Activated CD4-positive, alpha-beta T cell treated with anti-CD3 and anti-CD28 coated beads, Interleukin-2, amount 10 ng/mL, durations not matched to agents 7 days and 5 days (primary cell): ENCODE measurements at regions of chr2 and their contacts with region 1.

Region 1: GRCh38 chr2:38602732-38603401 is at the start of gene HNRNPLL:
- DNase-seq: peak; percentile 95
- H3K4me3 Mint-ChIP-seq: peak within 1 kb of the TSS; percentile 85
- H3K27ac Mint-ChIP-seq: peak within 1 kb of the TSS; percentile 95
- H3K4me1 Mint-ChIP-seq: peaks cover 49% of the 10 kb centered on the region
- H3K27me3 Mint-ChIP-seq: no peaks in the 10 kb centered on the region
- total RNA-seq, gene HNRNPLL: 54.2 to 55.8 TPM

Region 2: GRCh38 chr2:38308821-38309220 is 294.0 kb before region 1 on chr2:
- CTCF ChIA-PET with region 1: no interaction called
- POLR2A ChIA-PET with region 1: no interaction called
- DNase-seq: no peak
- H3K4me3 Mint-ChIP-seq: no peak overlapping the region
- H3K27ac Mint-ChIP-seq: no peak overlapping the region
- H3K4me1 Mint-ChIP-seq: peaks cover 18% of the 10 kb centered on the region
- H3K27me3 Mint-ChIP-seq: no peaks in the 10 kb centered on the region

Region 3: DNA sequence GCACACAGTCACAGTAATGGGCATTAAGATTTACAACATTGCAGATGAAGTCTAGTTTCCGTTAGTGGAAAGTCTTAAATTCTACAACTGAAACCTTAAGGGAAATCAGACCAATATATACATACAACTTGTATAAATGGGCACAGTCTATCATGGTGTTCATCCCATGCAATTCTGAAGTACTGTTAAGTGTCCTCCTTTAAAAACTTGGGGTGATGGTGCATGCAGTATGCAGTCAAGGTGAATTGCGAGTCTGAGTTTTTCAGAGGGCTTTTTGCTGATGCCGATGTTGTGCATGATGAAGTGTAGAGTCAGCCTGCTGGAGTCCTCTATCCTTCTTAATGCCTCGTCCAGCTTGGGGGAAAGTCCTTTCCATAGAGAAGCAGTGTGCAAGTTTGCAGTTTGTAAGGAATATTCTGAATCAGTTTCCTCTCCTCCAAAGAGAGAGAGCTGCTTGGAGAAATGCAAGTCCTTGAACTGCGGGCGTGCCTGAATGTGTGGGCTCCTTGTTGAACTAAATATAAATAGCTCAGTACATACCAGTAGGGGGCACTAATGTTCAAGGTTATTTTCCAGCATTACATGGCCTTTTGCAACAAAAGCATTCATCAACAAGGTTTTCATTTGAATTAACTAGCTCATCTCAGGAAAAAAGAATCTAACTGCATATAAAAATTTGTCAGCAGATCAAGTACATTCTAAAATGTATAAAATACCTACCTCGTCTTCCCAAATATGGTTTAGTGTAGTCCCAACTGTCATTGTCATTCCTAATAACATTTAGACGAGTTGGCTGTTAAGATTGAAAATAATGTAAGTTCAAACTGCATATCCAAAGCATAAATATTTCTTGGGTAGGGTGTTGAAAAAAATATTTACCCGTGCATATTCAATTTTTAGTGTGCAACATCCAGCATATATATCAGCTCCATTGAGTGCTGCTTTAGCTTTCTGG is 21.4 kb before region 1 on chr2:
- CTCF ChIA-PET with region 1: interaction called, 11 read pairs
- POLR2A ChIA-PET with region 1: interaction called, 3 read pairs
- DNase-seq: peak; percentile 58
- H3K4me3 Mint-ChIP-seq: no peak overlapping the region
- H3K27ac Mint-ChIP-seq: no peak overlapping the region
- H3K4me1 Mint-ChIP-seq: peaks cover 21% of the 10 kb centered on the region
- H3K27me3 Mint-ChIP-seq: no peaks in the 10 kb centered on the region

Region 4: GRCh38 chr2:38648107-38648761 is 45.4 kb after region 1 on chr2:
- CTCF ChIA-PET with region 1: interaction called, 13 read pairs
- POLR2A ChIA-PET with region 1: interaction called, 4 read pairs
- DNase-seq: no peak
- H3K4me3 Mint-ChIP-seq: no peak overlapping the region
- H3K27ac Mint-ChIP-seq: peak overlapping the region; percentile 51
- H3K4me1 Mint-ChIP-seq: peaks cover 72% of the 10 kb centered on the region
- H3K27me3 Mint-ChIP-seq: no peaks in the 10 kb centered on the region

Region 5: GRCh38 chr2:38665854-38666555 is 63.1 kb after region 1 on chr2 and contains the start of gene GALM:
- CTCF ChIA-PET with region 1: interaction called, 33 read pairs
- POLR2A ChIA-PET with region 1: interaction called, 13 read pairs
- DNase-seq: peak; percentile 64
- H3K4me3 Mint-ChIP-seq: peak within 1 kb of the TSS; percentile 85
- H3K27ac Mint-ChIP-seq: peak within 1 kb of the TSS; percentile 95
- H3K4me1 Mint-ChIP-seq: peaks cover 70% of the 10 kb centered on the region
- H3K27me3 Mint-ChIP-seq: no peaks in the 10 kb centered on the region
- total RNA-seq, gene GALM: 39.7 to 41.1 TPM

Region 6: DNA sequence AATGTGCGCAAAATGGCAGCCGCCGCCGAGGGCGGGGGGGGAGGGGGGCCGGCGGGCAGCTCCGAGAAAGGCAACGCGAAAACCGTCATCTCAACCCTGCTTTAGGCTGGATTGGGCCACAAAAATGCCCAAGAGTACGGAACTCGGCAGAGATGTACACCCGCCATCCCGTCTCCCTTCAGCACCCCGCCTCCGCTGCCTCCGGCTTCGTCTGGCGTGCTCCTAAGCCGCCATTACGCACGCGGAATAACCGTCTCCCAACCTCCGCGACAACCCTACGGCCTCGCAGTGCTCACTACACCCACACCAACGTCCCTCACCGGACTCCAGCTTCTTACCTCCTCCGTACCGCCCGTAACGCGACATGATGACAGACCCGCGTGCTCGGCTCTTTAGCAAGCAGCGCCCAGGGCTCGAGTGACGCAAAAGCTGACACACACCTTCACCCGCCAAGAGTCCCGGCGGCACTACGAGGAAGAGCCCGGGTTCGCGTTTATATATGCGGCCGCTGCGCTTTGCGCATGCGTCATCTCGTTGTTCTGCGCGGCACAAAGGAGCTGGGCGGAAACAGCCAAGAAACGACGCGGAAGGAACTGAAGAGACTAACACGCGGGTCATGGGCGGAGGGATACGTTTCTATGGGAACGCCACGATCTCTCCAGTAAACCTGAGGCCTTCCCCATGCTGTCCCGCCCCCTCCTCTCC is 148.2 kb after region 1 on chr2 and contains the start of gene SRSF7:
- CTCF ChIA-PET with region 1: interaction called, 3 read pairs
- POLR2A ChIA-PET with region 1: interaction called, 16 read pairs
- DNase-seq: peak; percentile 97
- H3K4me3 Mint-ChIP-seq: peak within 1 kb of the TSS; percentile 91
- H3K27ac Mint-ChIP-seq: peak within 1 kb of the TSS; percentile 99
- H3K4me1 Mint-ChIP-seq: peaks cover 53% of the 10 kb centered on the region
- H3K27me3 Mint-ChIP-seq: no peaks in the 10 kb centered on the region
- total RNA-seq, gene SRSF7: 225 to 272 TPM